ENCODE measurements at regions of chr7 and their contacts with region 1.

Region 1: GRCh38 chr7:157336383-157337315 is at the start of gene DNAJB6:
- DNase-seq: peak; percentile 92 to 97 (median 97)
- H3K4me3 ChIP-seq: peak within 1 kb of the TSS; percentile 67 to 88
- H3K4me3 Mint-ChIP-seq: peak within 1 kb of the TSS; percentile 89 to 99 (median 98)
- H3K27ac ChIP-seq: peak within 1 kb of the TSS; percentile 86
- H3K27ac Mint-ChIP-seq: peak within 1 kb of the TSS; percentile 97 to 99 (median 99)
- H3K4me1 ChIP-seq: peaks cover 40% of the 10 kb centered on the region
- H3K4me1 Mint-ChIP-seq: peaks cover 19 to 52% (median 41%) of the 10 kb centered on the region in 4 donors
- H3K27me3 ChIP-seq: no peaks in the 10 kb centered on the region
- H3K27me3 Mint-ChIP-seq: peaks cover 0 to 4% of the 10 kb centered on the region in 2 donors
- total RNA-seq, gene DNAJB6: 85.6 to 90.1 TPM

Region 2: GRCh38 chr7:157138424-157139110 is 198.1 kb before region 1 on chr7 and contains the start of gene UBE3C:
- CTCF ChIA-PET with region 1: no interaction called
- POLR2A ChIA-PET with region 1: interaction called, 4 read pairs
- intact Hi-C with region 1: loop called (anchors 1 kb)
- DNase-seq: peak; percentile 88 to 94 (median 94)
- H3K4me3 ChIP-seq: peak within 1 kb of the TSS; percentile 62 to 70
- H3K4me3 Mint-ChIP-seq: peak within 1 kb of the TSS; percentile 77 to 96 (median 88)
- H3K27ac ChIP-seq: peak within 1 kb of the TSS; percentile 79
- H3K27ac Mint-ChIP-seq: peak within 1 kb of the TSS; percentile 87 to 96 (median 92)
- H3K4me1 ChIP-seq: peaks cover 48% of the 10 kb centered on the region
- H3K4me1 Mint-ChIP-seq: peaks cover 29 to 53% (median 39%) of the 10 kb centered on the region in 4 donors
- H3K27me3 ChIP-seq: no peaks in the 10 kb centered on the region
- H3K27me3 Mint-ChIP-seq: no peaks in the 10 kb centered on the region
- total RNA-seq, gene UBE3C: 57.5 to 59.7 TPM

Region 3: DNA sequence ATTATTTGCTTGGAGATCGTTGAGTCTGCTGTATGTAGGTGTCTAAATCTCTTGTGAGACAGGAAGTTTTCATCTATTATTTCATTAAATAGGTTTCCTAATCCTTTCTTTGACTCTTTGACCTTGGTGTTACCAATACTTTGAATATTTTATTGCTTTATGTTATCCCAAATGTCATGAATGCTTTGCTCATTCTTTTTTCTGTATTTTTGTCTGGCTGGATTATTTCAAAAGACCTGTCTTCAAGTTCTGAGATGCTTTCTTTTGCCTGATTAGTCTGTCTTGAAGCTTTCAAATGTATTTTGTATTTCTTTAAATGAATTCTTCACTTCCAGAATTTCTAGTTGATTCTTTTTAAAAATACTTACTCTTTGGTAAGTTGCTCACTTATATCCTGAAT is 170.7 kb before region 1 on chr7:
- CTCF ChIA-PET with region 1: no interaction called
- POLR2A ChIA-PET with region 1: no interaction called
- intact Hi-C with region 1: no loop called
- DNase-seq: no peak
- H3K4me3 ChIP-seq: no peak overlapping the region
- H3K4me3 Mint-ChIP-seq: no peak overlapping the region
- H3K27ac ChIP-seq: no peak overlapping the region
- H3K27ac Mint-ChIP-seq: peak overlapping the region in 1 of 7 donors; percentile 87
- H3K4me1 ChIP-seq: no peaks in the 10 kb centered on the region
- H3K4me1 Mint-ChIP-seq: peaks cover under 1 to 16% (median 6%) of the 10 kb centered on the region in 4 donors
- H3K27me3 ChIP-seq: no peaks in the 10 kb centered on the region
- H3K27me3 Mint-ChIP-seq: no peaks in the 10 kb centered on the region

Region 4: GRCh38 chr7:157228864-157229422 is 107.7 kb before region 1 on chr7:
- CTCF ChIA-PET with region 1: interaction called, 10 read pairs
- POLR2A ChIA-PET with region 1: no interaction called
- intact Hi-C with region 1: loop called (anchors 1 kb)
- DNase-seq: peak in 4 of 5 donors; percentile 3 to 25 (median 16)
- H3K4me3 ChIP-seq: no peak overlapping the region
- H3K4me3 Mint-ChIP-seq: no peak overlapping the region
- H3K27ac ChIP-seq: no peak overlapping the region
- H3K27ac Mint-ChIP-seq: no peak overlapping the region
- H3K4me1 ChIP-seq: no peaks in the 10 kb centered on the region
- H3K4me1 Mint-ChIP-seq: peaks cover 0 to 3% (median under 1%) of the 10 kb centered on the region in 4 donors
- H3K27me3 ChIP-seq: no peaks in the 10 kb centered on the region
- H3K27me3 Mint-ChIP-seq: no peaks in the 10 kb centered on the region

Region 5: GRCh38 chr7:157250605-157251228 is 85.9 kb before region 1 on chr7:
- CTCF ChIA-PET with region 1: no interaction called
- POLR2A ChIA-PET with region 1: no interaction called
- intact Hi-C with region 1: loop called (anchors 2 kb)
- DNase-seq: peak; percentile 40 to 55 (median 43)
- H3K4me3 ChIP-seq: no peak overlapping the region
- H3K4me3 Mint-ChIP-seq: no peak overlapping the region
- H3K27ac ChIP-seq: no peak overlapping the region
- H3K27ac Mint-ChIP-seq: peak overlapping the region in 4 of 7 donors; percentile 37 to 63 (median 56)
- H3K4me1 ChIP-seq: no peaks in the 10 kb centered on the region
- H3K4me1 Mint-ChIP-seq: peaks cover 0 to 3% (median 1%) of the 10 kb centered on the region in 4 donors
- H3K27me3 ChIP-seq: no peaks in the 10 kb centered on the region
- H3K27me3 Mint-ChIP-seq: no peaks in the 10 kb centered on the region

Region 6: DNA sequence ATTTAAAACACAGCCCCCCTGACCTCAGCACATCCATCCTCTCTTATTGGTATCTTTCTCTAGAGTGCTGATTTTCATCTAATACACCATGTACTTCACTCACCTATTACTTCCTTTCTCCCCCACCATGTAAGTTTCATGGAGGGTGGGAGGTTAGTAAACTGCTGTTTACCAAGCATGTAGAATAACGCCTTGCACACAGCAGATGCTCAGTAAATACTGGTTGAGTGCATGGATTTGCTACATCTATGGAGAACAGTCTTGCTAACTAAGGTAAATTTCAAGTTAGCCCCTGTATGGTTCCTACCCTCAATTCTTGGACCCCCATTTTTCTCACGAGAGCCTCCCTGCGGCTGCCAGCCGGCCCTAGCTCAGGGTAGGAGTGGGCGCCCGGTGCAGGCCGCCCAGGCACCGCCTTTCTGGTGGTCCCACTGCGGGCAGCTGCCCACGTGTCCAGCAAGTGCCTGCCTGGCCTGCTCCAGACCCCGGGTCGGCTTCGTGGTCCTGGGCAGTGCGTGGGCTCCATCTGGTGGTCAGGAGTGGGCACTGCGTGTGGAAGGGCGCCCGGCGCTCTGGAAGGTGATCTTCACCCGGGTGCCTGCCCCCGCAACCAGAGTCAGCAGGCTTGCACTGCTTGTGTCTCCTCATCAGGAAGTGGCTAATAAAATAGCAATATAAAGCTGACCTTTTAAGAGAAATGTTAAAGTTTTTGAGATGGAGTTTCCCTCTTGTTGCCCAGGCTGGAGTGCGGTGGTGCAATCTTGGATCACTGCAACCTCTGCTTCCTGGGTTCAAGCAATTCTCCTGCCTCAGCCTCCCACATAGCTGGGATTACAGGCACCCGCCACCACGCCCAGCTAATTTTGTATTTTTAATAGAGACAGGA is 63.2 kb before region 1 on chr7:
- CTCF ChIA-PET with region 1: interaction called, 35 read pairs
- POLR2A ChIA-PET with region 1: interaction called, 4 read pairs
- intact Hi-C with region 1: loop called (anchors 5 kb)
- DNase-seq: peak; percentile 43 to 63 (median 51)
- H3K4me3 ChIP-seq: no peak overlapping the region
- H3K4me3 Mint-ChIP-seq: peak overlapping the region in 2 of 8 donors; percentile 2 to 23
- H3K27ac ChIP-seq: no peak overlapping the region
- H3K27ac Mint-ChIP-seq: peak overlapping the region in 6 of 7 donors; percentile 37 to 85 (median 44)
- H3K4me1 ChIP-seq: peaks cover 37% of the 10 kb centered on the region
- H3K4me1 Mint-ChIP-seq: peaks cover 21 to 43% (median 31%) of the 10 kb centered on the region in 4 donors
- H3K27me3 ChIP-seq: no peaks in the 10 kb centered on the region
- H3K27me3 Mint-ChIP-seq: peaks cover 1 to 7% of the 10 kb centered on the region in 2 donors

Region 7: GRCh38 chr7:157299613-157300368 is 36.9 kb before region 1 on chr7:
- CTCF ChIA-PET with region 1: interaction called, 16 read pairs
- POLR2A ChIA-PET with region 1: interaction called, 79 read pairs
- intact Hi-C with region 1: loop called (anchors 1 kb)
- DNase-seq: peak; percentile 42 to 65 (median 57)
- H3K4me3 ChIP-seq: no peak overlapping the region
- H3K4me3 Mint-ChIP-seq: no peak overlapping the region
- H3K27ac ChIP-seq: peak overlapping the region; percentile 9
- H3K27ac Mint-ChIP-seq: peak overlapping the region in 5 of 7 donors; percentile 86 to 96 (median 93)
- H3K4me1 ChIP-seq: peaks cover 20% of the 10 kb centered on the region
- H3K4me1 Mint-ChIP-seq: peaks cover 26 to 35% (median 30%) of the 10 kb centered on the region in 4 donors
- H3K27me3 ChIP-seq: no peaks in the 10 kb centered on the region
- H3K27me3 Mint-ChIP-seq: no peaks in the 10 kb centered on the region

Region 8: GRCh38 chr7:157386979-157387800 is 50.5 kb after region 1 on chr7:
- CTCF ChIA-PET with region 1: interaction called, 4 read pairs
- POLR2A ChIA-PET with region 1: no interaction called
- intact Hi-C with region 1: loop called (anchors 1 kb)
- DNase-seq: peak; percentile 83 to 94 (median 85)
- H3K4me3 ChIP-seq: no peak overlapping the region
- H3K4me3 Mint-ChIP-seq: peak overlapping the region in 7 of 8 donors; percentile 29 to 69 (median 37)
- H3K27ac ChIP-seq: peak overlapping the region; percentile 35
- H3K27ac Mint-ChIP-seq: peak overlapping the region; percentile 77 to 96 (median 86)
- H3K4me1 ChIP-seq: peaks cover 44% of the 10 kb centered on the region
- H3K4me1 Mint-ChIP-seq: peaks cover 31 to 51% (median 40%) of the 10 kb centered on the region in 4 donors
- H3K27me3 ChIP-seq: no peaks in the 10 kb centered on the region
- H3K27me3 Mint-ChIP-seq: no peaks in the 10 kb centered on the region

Region 9: GRCh38 chr7:157490457-157490912 is 153.8 kb after region 1 on chr7:
- CTCF ChIA-PET with region 1: no interaction called
- POLR2A ChIA-PET with region 1: no interaction called
- intact Hi-C with region 1: no loop called
- DNase-seq: peak; percentile 79 to 86 (median 81)
- H3K4me3 ChIP-seq: no peak overlapping the region
- H3K4me3 Mint-ChIP-seq: peak overlapping the region in 7 of 8 donors; percentile 4 to 73 (median 66)
- H3K27ac ChIP-seq: peak overlapping the region; percentile 6
- H3K27ac Mint-ChIP-seq: peak overlapping the region; percentile 55 to 93 (median 87)
- H3K4me1 ChIP-seq: peaks cover 37% of the 10 kb centered on the region
- H3K4me1 Mint-ChIP-seq: peaks cover 26 to 50% (median 37%) of the 10 kb centered on the region in 4 donors
- H3K27me3 ChIP-seq: no peaks in the 10 kb centered on the region
- H3K27me3 Mint-ChIP-seq: peaks cover 0 to 2% of the 10 kb centered on the region in 2 donors

Region 10: DNA sequence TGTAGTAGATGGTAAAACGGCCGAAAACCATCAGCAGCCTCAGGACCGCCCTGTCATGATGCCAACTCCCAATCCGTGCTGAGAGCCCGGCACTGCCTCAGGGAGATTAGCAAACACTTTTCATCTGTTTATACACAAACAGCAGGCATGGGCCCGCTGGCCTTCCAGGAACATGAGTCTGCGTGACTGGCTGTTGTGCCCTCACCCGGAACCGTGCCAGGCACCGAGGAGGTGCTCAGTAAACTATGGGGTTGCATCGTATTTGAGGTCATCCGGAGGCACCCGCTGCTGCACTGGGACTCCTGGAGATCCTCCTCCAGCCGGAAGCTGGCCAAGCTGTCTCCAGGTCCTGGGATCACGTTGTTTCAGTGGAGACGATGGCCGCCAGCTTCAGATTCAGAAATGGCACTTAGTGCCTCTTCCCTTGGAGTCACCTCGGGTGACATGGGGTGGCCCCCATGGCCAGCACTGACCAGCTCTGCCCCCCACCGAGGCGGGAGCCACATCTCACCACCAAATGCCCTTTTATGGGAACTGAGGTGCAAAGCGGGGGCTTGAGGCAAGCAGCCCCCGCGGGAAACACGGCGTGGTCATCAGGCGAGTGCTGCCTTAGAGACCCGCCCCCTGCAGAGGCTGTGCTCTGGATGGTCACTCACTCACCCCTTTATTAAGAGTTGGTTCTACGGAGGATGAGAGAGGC is 665.1 kb after region 1 on chr7:
- CTCF ChIA-PET with region 1: no interaction called
- POLR2A ChIA-PET with region 1: no interaction called
- intact Hi-C with region 1: no loop called
- DNase-seq: no peak
- H3K4me3 ChIP-seq: no peak overlapping the region
- H3K4me3 Mint-ChIP-seq: no peak overlapping the region
- H3K27ac ChIP-seq: no peak overlapping the region
- H3K27ac Mint-ChIP-seq: no peak overlapping the region
- H3K4me1 ChIP-seq: no peaks in the 10 kb centered on the region
- H3K4me1 Mint-ChIP-seq: no peaks in the 10 kb centered on the region
- H3K27me3 ChIP-seq: no peaks in the 10 kb centered on the region
- H3K27me3 Mint-ChIP-seq: peaks cover 0 to 2% of the 10 kb centered on the region in 2 donors